Activated CD8-positive, alpha-beta T cell treated with anti-CD3 and anti-CD28 coated beads for 36 hours (primary cell): ENCODE measurements at regions of chr16 and their contacts with region 1.

Region 1: DNA sequence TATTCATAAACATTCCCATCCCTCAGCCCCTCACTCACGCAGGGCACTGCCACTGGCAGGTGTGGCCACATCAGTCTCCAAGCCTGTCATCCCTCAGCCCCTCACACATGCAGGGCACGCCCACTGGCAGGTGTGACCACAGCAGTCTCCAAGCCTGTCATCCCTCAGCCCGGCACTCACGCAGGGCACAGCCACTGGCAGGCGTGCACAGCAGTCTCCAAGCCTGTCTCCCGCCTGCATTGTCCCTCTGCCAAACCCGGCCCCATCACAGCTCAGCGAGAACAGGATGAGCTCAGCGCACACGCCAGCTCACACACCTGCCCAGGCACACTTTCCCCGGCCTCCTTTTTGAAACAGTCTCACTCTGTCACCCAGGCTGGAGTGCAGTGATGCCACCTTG is 11.4 kb upstream of the KREMEN2 start:
- DNase-seq: no peak
- ATAC-seq: no peak
- H3K4me3 Mint-ChIP-seq: no peak overlapping the region
- H3K27ac Mint-ChIP-seq: no peak overlapping the region
- H3K4me1 Mint-ChIP-seq: peaks cover 5% of the 10 kb centered on the region
- H3K27me3 Mint-ChIP-seq: peaks cover 8% of the 10 kb centered on the region
- CTCF ChIP-seq: no peak

Region 2: DNA sequence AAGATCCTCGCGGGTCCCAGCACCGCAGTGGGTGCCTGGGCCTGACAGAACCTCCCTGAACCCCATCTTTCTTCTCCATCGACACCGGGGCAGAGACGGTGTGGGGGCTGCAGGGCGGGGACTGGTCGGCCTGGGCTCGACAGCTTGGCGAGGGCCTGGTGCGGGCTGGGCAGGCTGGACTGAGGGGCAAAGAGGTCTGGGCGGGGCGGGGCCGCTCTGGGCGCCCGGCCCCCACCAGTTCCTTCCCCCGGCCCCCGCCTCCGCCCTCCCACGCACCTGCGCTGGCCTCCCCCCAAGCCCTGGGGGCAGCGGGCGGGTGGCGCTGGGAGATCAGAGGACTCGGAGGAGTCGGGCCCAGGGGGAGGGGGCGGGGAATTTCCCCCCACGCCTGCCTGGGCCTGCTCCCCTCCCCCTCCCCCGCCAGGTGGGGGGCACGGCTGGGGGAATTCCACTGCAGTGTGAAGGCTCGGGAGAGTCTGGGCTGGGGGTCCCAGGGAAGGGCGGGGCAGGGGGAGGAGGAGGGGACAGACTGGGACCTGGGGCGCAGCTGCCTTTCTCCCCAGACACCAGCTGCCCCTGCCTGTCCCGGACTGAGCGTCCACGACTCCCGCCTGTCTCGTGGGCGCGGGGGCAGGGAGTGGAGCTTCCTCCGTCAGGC is 10.5 kb after region 1 on chr16:
- CTCF ChIA-PET with region 1: interaction called, 11 read pairs
- POLR2A ChIA-PET with region 1: interaction called, 4 read pairs
- intact Hi-C with region 1: no loop called
- DNase-seq: no peak
- ATAC-seq: no peak
- H3K4me3 Mint-ChIP-seq: peak overlapping the region; percentile 51
- H3K27ac Mint-ChIP-seq: no peak overlapping the region
- H3K4me1 Mint-ChIP-seq: peaks cover 25% of the 10 kb centered on the region
- H3K27me3 Mint-ChIP-seq: peaks cover 30% of the 10 kb centered on the region
- CTCF ChIP-seq: no peak